IMR-90 (cell line): ENCODE measurements at regions of chr15 and their contacts with region 1.

Region 1: GRCh38 chr15:51499379-51499976 is 123.1 kb downstream of the DMXL2 start:
- DNase-seq: peak; percentile 63
- ATAC-seq: peak; percentile 81
- H3K4me3 ChIP-seq: no peak overlapping the region
- H3K27ac ChIP-seq: no peak overlapping the region
- H3K4me1 ChIP-seq: peaks cover 4% of the 10 kb centered on the region
- H3K27me3 ChIP-seq: no peaks in the 10 kb centered on the region
- CTCF ChIP-seq: peak; percentile 66
- POLR2A ChIP-seq: no peak
- RAD21 ChIP-seq: peak; percentile 67

Region 2: GRCh38 chr15:51227940-51228783 is 271.3 kb before region 1 on chr15:
- CTCF ChIA-PET with region 1: interaction called, 3 read pairs
- POLR2A ChIA-PET with region 1: no interaction called
- dilution Hi-C with region 1: no loop called
- in situ Hi-C with region 1: no loop called
- intact Hi-C with region 1: loop called (anchors 10 kb)
- DNase-seq: peak; percentile 89
- ATAC-seq: peak; percentile 80
- H3K4me3 ChIP-seq: no peak overlapping the region
- H3K27ac ChIP-seq: no peak overlapping the region
- H3K4me1 ChIP-seq: peaks cover 12% of the 10 kb centered on the region
- H3K27me3 ChIP-seq: no peaks in the 10 kb centered on the region
- CTCF ChIP-seq: no peak
- POLR2A ChIP-seq: no peak
- RAD21 ChIP-seq: no peak

Region 3: DNA sequence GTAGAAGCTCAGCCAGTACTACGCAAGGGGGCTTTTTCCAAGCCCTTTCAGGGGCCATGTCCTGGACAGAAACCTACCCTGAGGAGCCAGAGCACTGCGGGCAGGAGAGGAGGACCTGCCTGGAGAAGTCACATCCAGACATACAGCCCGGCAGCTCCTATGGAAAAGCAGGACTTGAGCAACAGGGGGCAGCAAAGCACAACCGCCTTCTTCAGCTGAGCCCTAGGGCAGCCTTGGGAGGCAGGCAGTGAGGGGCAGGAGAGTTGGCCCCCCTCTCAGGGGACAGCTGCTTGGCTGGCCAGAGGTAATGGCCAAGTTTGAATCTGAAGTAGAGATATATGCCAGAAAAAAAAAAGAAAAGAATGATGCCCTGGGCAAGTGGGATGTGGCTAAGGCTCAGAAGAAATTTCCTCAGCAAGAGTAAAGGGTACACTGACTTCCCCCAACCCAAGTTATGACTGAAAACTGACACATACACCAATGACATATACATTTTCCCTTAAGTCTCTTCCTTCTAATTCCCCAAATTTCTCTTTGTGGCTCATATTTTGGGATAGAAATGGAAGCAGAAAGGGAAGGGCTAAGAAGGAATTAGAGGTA is 218.0 kb before region 1 on chr15:
- CTCF ChIA-PET with region 1: no interaction called
- POLR2A ChIA-PET with region 1: no interaction called
- dilution Hi-C with region 1: no loop called
- in situ Hi-C with region 1: no loop called
- intact Hi-C with region 1: loop called (anchors 5 kb)
- DNase-seq: peak; percentile 53
- ATAC-seq: peak; percentile 99
- H3K4me3 ChIP-seq: no peak overlapping the region
- H3K27ac ChIP-seq: no peak overlapping the region
- H3K4me1 ChIP-seq: no peaks in the 10 kb centered on the region; the same call in 1 of the 2 replicates
- H3K27me3 ChIP-seq: peaks cover 50% of the 10 kb centered on the region
- CTCF ChIP-seq: peak; percentile 82
- POLR2A ChIP-seq: no peak
- RAD21 ChIP-seq: peak; percentile 87

Region 4: DNA sequence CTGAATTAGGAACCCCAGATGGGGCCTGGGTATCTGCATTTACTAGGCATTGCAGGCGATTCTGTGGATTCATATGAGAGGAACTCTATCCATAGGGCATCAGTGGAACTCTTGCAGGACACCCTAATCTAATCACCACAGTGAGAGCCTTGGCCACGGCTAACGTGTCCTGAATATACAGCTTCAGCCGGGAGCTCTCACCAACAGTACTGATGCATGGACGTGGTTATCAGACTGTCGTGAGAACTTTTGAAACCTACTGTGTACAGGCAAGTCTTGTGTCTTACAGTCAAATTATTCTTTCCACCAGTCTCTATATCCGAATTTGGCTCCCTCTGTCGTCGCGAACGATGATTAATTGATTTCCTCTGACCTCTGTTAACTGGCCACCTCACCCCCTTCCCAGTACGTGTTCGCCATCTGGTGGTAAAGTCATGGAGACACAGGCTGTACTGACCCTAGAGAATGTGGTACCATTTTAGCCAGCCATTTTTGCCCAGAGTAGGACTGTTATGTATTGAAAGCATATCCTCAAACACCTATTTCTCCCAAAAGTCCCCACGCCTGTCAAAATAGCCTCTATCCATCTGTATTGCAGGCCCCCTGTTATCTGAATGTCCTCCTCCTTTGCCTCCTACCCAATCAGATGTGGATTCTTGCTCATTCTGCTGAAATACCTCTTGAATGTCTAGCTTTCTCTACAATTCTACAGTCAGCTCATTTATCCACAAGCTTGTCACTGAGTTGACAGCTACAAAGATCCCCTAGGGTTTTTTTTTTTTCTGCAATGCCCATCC is 118.3 kb before region 1 on chr15:
- CTCF ChIA-PET with region 1: no interaction called
- POLR2A ChIA-PET with region 1: no interaction called
- dilution Hi-C with region 1: no loop called
- in situ Hi-C with region 1: no loop called
- intact Hi-C with region 1: loop called (anchors 1 kb)
- DNase-seq: peak; percentile 64
- ATAC-seq: peak; percentile 84
- H3K4me3 ChIP-seq: no peak overlapping the region
- H3K27ac ChIP-seq: no peak overlapping the region
- H3K4me1 ChIP-seq: peaks cover 8% of the 10 kb centered on the region
- H3K27me3 ChIP-seq: peaks cover 38% of the 10 kb centered on the region
- CTCF ChIP-seq: peak; percentile 97
- POLR2A ChIP-seq: no peak
- RAD21 ChIP-seq: peak; percentile 98

Region 5: GRCh38 chr15:51401872-51402517 is 97.5 kb before region 1 on chr15:
- CTCF ChIA-PET with region 1: interaction called, 5 read pairs
- POLR2A ChIA-PET with region 1: no interaction called
- dilution Hi-C with region 1: no loop called
- in situ Hi-C with region 1: no loop called
- intact Hi-C with region 1: loop called (anchors 2 kb)
- DNase-seq: peak; percentile 26
- ATAC-seq: peak; percentile 76
- H3K4me3 ChIP-seq: no peak overlapping the region
- H3K27ac ChIP-seq: no peak overlapping the region
- H3K4me1 ChIP-seq: no peaks in the 10 kb centered on the region
- H3K27me3 ChIP-seq: peaks cover 48% of the 10 kb centered on the region
- CTCF ChIP-seq: peak; percentile 63
- POLR2A ChIP-seq: no peak
- RAD21 ChIP-seq: peak; percentile 57

Region 6: GRCh38 chr15:51475736-51476135 is 23.7 kb before region 1 on chr15:
- CTCF ChIA-PET with region 1: no interaction called
- POLR2A ChIA-PET with region 1: no interaction called
- dilution Hi-C with region 1: no loop called
- in situ Hi-C with region 1: no loop called
- intact Hi-C with region 1: loop called (anchors 1 kb)
- DNase-seq: no peak
- ATAC-seq: peak; percentile 46; the same call in 1 of the 2 replicates
- H3K4me3 ChIP-seq: no peak overlapping the region
- H3K27ac ChIP-seq: no peak overlapping the region; the same call in 1 of the 2 replicates
- H3K4me1 ChIP-seq: no peaks in the 10 kb centered on the region
- H3K27me3 ChIP-seq: no peaks in the 10 kb centered on the region
- CTCF ChIP-seq: no peak
- POLR2A ChIP-seq: no peak
- RAD21 ChIP-seq: no peak